Activated naive CD4-positive, alpha-beta T cell treated with anti-CD3 and anti-CD28 coated beads for 36 hours (primary cell): ENCODE measurements at regions of chr1 and their contacts with region 1.

Region 1: GRCh38 chr1:95072532-95073419 is at the start of gene ALG14:
- DNase-seq: peak; percentile 96
- H3K4me3 Mint-ChIP-seq: peak within 1 kb of the TSS; percentile 91
- H3K27ac Mint-ChIP-seq: peak within 1 kb of the TSS; percentile 95
- H3K4me1 Mint-ChIP-seq: peaks cover 12% of the 10 kb centered on the region
- H3K27me3 Mint-ChIP-seq: peaks cover 2% of the 10 kb centered on the region
- total RNA-seq, gene ALG14: 4.1 to 6.2 TPM

Region 2: GRCh38 chr1:94417978-94418663 is 654.7 kb before region 1 on chr1 and contains the start of gene ABCD3:
- CTCF ChIA-PET with region 1: no interaction called
- intact Hi-C with region 1: loop called (anchors 1 kb)
- DNase-seq: peak; percentile 94
- H3K4me3 Mint-ChIP-seq: no peak within 1 kb of the TSS
- H3K27ac Mint-ChIP-seq: peak within 1 kb of the TSS; percentile 43
- H3K4me1 Mint-ChIP-seq: peaks cover 35% of the 10 kb centered on the region
- H3K27me3 Mint-ChIP-seq: no peaks in the 10 kb centered on the region
- total RNA-seq, gene ABCD3: 29.2 to 30.8 TPM

Region 3: GRCh38 chr1:94854458-94855306 is 218.1 kb before region 1 on chr1:
- CTCF ChIA-PET with region 1: interaction called, 7 read pairs
- intact Hi-C with region 1: loop called (anchors 2 kb)
- DNase-seq: peak; percentile 91
- H3K4me3 Mint-ChIP-seq: no peak overlapping the region
- H3K27ac Mint-ChIP-seq: no peak overlapping the region
- H3K4me1 Mint-ChIP-seq: no peaks in the 10 kb centered on the region
- H3K27me3 Mint-ChIP-seq: peaks cover 3% of the 10 kb centered on the region

Region 4: GRCh38 chr1:94962409-94963265 is 110.1 kb before region 1 on chr1:
- CTCF ChIA-PET with region 1: no interaction called
- intact Hi-C with region 1: loop called (anchors 1 kb)
- DNase-seq: peak; percentile 48
- H3K4me3 Mint-ChIP-seq: peak overlapping the region; percentile 84
- H3K27ac Mint-ChIP-seq: peak overlapping the region; percentile 84
- H3K4me1 Mint-ChIP-seq: peaks cover 8% of the 10 kb centered on the region
- H3K27me3 Mint-ChIP-seq: no peaks in the 10 kb centered on the region

Region 5: GRCh38 chr1:95116580-95117206 is 43.9 kb after region 1 on chr1:
- CTCF ChIA-PET with region 1: interaction called, 8 read pairs
- intact Hi-C with region 1: loop called (anchors 1 kb)
- DNase-seq: peak; percentile 68
- H3K4me3 Mint-ChIP-seq: peak overlapping the region; percentile 76
- H3K27ac Mint-ChIP-seq: no peak overlapping the region
- H3K4me1 Mint-ChIP-seq: peaks cover 3% of the 10 kb centered on the region
- H3K27me3 Mint-ChIP-seq: peaks cover 24% of the 10 kb centered on the region